GM12878 (cell line): ENCODE measurements at regions of chr3 and their contacts with region 1.

Region 1: GRCh38 chr3:169772897-169773828 is at the start of gene MYNN:
- DNase-seq: peak; percentile 63
- ATAC-seq: peak; percentile 88
- H3K4me3 ChIP-seq: peak within 1 kb of the TSS; percentile 97
- H3K27ac ChIP-seq: peak within 1 kb of the TSS; percentile 99
- H3K4me1 ChIP-seq: peaks cover 14% of the 10 kb centered on the region; the same call in 1 of the 2 replicates
- H3K27me3 ChIP-seq: no peaks in the 10 kb centered on the region
- CTCF ChIP-seq: peak in 2 of 3 experiments; percentile 0 to 12; a peak in 1 of 6 replicates
- EP300 ChIP-seq: no peak
- POLR2A ChIP-seq: peak; percentile 99
- RAD21 ChIP-seq: no peak
- polyA plus RNA-seq, gene MYNN: 14.9 to 16.7 TPM

Region 2: DNA sequence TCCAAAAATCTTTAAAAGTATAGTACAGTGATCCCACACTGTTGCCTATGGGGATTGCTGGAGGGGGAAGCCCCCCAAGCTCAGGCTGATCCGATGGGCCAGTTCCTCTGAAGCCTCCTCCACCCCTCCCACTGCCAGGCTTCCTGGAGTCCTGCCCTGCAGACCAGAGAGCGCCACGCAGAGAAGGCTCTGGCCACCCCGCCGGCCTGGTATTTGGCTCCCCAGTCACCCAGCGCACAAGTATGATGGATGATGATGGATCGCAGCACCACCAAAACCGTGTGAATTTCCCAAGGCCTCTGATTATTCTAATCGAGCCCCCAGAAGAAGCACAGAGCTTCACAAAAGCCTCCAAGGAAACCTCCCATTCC is 368.7 kb before region 1 on chr3:
- CTCF ChIA-PET with region 1: no interaction called
- POLR2A ChIA-PET with region 1: no interaction called
- RAD21 ChIA-PET with region 1: no interaction called
- SMC1A ChIA-PET with region 1: no interaction called
- in situ Hi-C with region 1: no loop called
- intact Hi-C with region 1: no loop called
- DNase-seq: no peak
- ATAC-seq: no peak
- H3K4me3 ChIP-seq: no peak overlapping the region
- H3K27ac ChIP-seq: no peak overlapping the region
- H3K4me1 ChIP-seq: no peaks in the 10 kb centered on the region
- H3K27me3 ChIP-seq: no peaks in the 10 kb centered on the region
- CTCF ChIP-seq: no peak
- EP300 ChIP-seq: no peak
- POLR2A ChIP-seq: no peak
- RAD21 ChIP-seq: no peak

Region 3: DNA sequence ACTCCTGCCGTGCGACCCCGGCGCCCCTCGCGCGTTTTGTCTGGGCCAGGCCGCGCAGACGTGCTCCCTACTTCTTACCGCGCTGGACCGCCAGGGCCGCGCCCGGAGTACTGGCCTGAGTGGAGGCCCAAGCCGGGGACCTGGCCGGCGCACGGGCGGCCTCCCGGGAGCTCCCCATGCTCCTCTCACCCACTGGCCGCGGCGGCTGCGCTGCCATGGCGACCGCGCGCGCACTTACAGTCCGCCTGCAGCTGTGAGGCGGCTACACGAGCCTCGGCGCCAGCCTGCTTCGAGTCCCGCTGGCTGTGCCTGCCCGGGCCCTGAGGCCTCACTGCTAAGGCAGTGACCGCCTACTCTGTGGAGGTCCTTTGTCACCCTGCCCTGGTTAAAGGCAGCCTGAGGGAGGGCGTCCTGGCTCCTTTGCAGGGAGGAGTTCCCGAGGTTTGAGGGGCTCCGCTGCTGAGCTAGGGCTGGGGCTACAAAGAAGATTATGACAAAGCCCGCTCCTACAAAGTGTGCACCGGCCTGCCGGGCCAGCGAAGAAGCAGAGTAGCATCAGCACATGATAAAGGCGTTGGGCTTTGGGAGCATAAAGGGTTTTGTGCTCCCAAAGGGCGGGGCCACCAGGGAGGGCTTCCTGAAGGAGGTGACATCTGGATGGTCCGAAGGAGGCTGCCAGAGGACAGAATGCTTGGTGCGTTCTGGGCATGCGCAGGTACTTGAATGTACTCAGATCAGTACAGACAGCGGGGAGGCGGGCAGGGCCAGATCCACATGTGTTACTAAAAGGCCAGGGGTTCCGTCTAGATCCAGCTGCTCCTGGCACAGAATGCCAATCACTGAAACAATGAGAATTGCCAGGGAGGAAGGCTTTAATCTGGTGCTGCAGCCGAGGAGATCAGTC is 39.4 kb after region 1 on chr3 and contains the starts of genes LRRC34 and LRRIQ4:
- CTCF ChIA-PET with region 1: interaction called, 5 read pairs
- POLR2A ChIA-PET with region 1: no interaction called
- RAD21 ChIA-PET with region 1: interaction called, 10 read pairs
- SMC1A ChIA-PET with region 1: interaction called, 3 read pairs
- in situ Hi-C with region 1: no loop called
- intact Hi-C with region 1: loop called (anchors 1 kb)
- DNase-seq: peak; percentile 44
- ATAC-seq: peak; percentile 79
- H3K4me3 ChIP-seq: peak within 1 kb of the TSS; percentile 71
- H3K27ac ChIP-seq: peak within 1 kb of the TSS; percentile 45
- H3K4me1 ChIP-seq: peaks cover 12% of the 10 kb centered on the region
- H3K27me3 ChIP-seq: no peaks in the 10 kb centered on the region
- CTCF ChIP-seq: no peak
- EP300 ChIP-seq: no peak
- POLR2A ChIP-seq: peak; percentile 59
- RAD21 ChIP-seq: no peak
- polyA plus RNA-seq, gene LRRC34: 0.34 to 1.4 TPM
- polyA plus RNA-seq, gene LRRIQ4: not detected

Region 4: GRCh38 chr3:169907463-169907862 is 134.3 kb after region 1 on chr3:
- CTCF ChIA-PET with region 1: no interaction called
- POLR2A ChIA-PET with region 1: no interaction called
- RAD21 ChIA-PET with region 1: no interaction called
- SMC1A ChIA-PET with region 1: no interaction called
- in situ Hi-C with region 1: no loop called
- intact Hi-C with region 1: no loop called
- DNase-seq: no peak
- ATAC-seq: no peak
- H3K4me3 ChIP-seq: no peak overlapping the region
- H3K27ac ChIP-seq: no peak overlapping the region
- H3K4me1 ChIP-seq: no peaks in the 10 kb centered on the region
- H3K27me3 ChIP-seq: peaks cover 0 to 2% of the 10 kb centered on the region in 2 experiments; a peak in 1 of 4 replicates
- CTCF ChIP-seq: no peak
- EP300 ChIP-seq: no peak
- POLR2A ChIP-seq: no peak
- RAD21 ChIP-seq: no peak

Region 5: DNA sequence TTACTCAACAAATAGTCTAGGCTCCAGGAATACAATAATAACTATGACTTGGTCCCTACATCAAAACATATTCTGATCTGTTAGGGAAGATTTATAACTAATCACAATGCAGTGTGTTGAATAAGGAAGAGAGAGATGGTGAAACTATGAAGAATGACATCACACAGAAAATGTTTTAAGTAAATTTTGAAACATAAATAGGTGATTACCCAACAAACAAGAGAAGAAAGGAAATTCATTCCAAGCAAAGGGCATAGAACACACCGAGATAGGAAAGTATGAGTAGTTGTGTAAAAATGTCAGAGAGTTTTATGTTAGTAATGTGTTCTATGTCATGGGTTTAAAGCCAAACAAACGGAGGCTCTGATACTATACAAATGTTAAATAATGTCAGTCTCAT is 206.9 kb after region 1 on chr3:
- CTCF ChIA-PET with region 1: no interaction called
- POLR2A ChIA-PET with region 1: no interaction called
- RAD21 ChIA-PET with region 1: no interaction called
- SMC1A ChIA-PET with region 1: no interaction called
- in situ Hi-C with region 1: no loop called
- intact Hi-C with region 1: no loop called
- DNase-seq: no peak
- ATAC-seq: no peak
- H3K4me3 ChIP-seq: no peak overlapping the region
- H3K27ac ChIP-seq: no peak overlapping the region
- H3K4me1 ChIP-seq: peaks cover 6% of the 10 kb centered on the region
- H3K27me3 ChIP-seq: no peaks in the 10 kb centered on the region
- CTCF ChIP-seq: no peak
- EP300 ChIP-seq: no peak
- POLR2A ChIP-seq: no peak
- RAD21 ChIP-seq: no peak

Region 6: DNA sequence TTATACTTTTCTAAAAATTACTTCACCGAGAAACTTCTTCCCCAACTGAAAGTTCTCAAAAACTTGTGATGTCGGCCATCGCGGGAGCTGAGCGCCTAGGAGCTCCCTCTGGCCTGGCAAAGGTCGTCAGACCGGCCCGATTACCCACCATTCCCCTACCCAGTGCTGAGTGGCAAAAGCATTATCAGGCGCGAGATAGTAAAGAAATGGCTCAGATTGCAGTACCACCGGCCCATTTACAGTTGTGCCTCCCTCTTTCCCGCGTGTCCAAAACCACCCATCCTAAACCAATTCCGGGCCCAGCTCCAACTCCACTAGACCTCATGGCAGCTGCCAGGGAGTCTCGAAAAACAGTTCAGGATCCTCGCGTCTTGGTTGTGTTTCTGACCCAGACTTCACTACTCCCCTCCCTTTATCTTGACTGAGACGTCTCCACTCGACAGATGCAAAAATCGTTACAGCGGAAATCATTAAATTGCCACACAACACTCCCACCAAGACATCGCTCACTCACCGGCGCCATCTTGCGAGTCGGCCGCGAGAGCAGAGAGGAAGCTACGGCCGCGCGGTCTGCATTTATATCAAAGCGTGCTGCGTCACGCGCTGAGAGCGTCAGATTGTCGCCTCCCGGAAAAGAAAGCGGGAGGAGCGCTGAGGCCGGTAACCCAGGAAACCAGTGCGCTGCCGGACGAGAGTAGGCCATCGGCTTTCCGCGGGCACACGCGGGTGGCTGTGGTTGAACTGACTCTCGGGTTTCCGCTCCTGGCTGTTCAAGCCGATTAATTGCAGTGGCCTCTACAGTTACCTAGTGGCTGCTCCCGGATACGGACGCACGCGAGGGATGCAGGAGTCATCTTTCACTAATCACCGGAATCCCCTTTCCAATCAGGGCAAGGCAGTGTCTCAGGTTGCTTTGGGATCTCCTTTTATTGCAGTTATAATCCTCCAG is 1096.8 kb after region 1 on chr3 and contains the start of gene RPL22L1:
- CTCF ChIA-PET with region 1: no interaction called
- POLR2A ChIA-PET with region 1: interaction called, 8 read pairs
- RAD21 ChIA-PET with region 1: no interaction called
- SMC1A ChIA-PET with region 1: no interaction called
- in situ Hi-C with region 1: no loop called
- intact Hi-C with region 1: loop called (anchors 5 kb)
- DNase-seq: peak; percentile 91
- ATAC-seq: peak; percentile 95
- H3K4me3 ChIP-seq: peak within 1 kb of the TSS; percentile 87
- H3K27ac ChIP-seq: peak within 1 kb of the TSS; percentile 96
- H3K4me1 ChIP-seq: no peaks in the 10 kb centered on the region; the same call in 1 of the 2 replicates
- H3K27me3 ChIP-seq: no peaks in the 10 kb centered on the region
- CTCF ChIP-seq: peak in 2 of 3 experiments; percentile 5 to 18; a peak in 1 of 6 replicates
- EP300 ChIP-seq: peak in 1 of 2 experiments; percentile 14; a peak in 1 of 4 replicates
- POLR2A ChIP-seq: peak; percentile 100
- RAD21 ChIP-seq: no peak
- polyA plus RNA-seq, gene RPL22L1: 690 to 803 TPM